ENCODE measurements at regions of chr3 and their contacts with region 1.

Region 1: GRCh38 chr3:188154014-188154808 is at the start of gene LPP:
- DNase-seq: peak; percentile 91
- ATAC-seq: peak; percentile 76
- H3K4me3 Mint-ChIP-seq: peak within 1 kb of the TSS; percentile 76
- H3K27ac Mint-ChIP-seq: peak within 1 kb of the TSS; percentile 95
- H3K4me1 Mint-ChIP-seq: peaks cover 64% of the 10 kb centered on the region
- H3K27me3 Mint-ChIP-seq: peaks cover 3% of the 10 kb centered on the region
- total RNA-seq, gene LPP: 34.7 to 40.6 TPM

Region 2: DNA sequence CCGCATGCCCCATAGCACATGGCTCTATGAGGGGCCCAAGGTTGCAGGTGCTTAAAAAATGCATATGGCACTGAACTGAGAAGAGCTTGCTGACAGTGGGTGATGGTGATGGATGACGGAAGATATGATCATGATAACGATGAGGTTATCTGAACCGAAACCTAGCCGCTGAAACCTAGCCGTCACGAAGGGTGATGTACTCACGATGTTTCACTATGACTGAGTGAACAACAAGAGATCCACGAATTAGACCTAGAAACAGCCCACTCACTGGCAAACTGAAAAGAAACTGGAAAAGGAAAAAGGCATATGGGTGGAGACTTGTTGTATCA is 351.3 kb before region 1 on chr3:
- CTCF ChIA-PET with region 1: no interaction called
- POLR2A ChIA-PET with region 1: no interaction called
- intact Hi-C with region 1: loop called in 1 of 2 experiments (anchors 5 kb)
- DNase-seq: peak; percentile 86
- ATAC-seq: peak; percentile 60
- H3K4me3 Mint-ChIP-seq: peak overlapping the region; percentile 34
- H3K27ac Mint-ChIP-seq: peak overlapping the region; percentile 81
- H3K4me1 Mint-ChIP-seq: peaks cover 93% of the 10 kb centered on the region
- H3K27me3 Mint-ChIP-seq: no peaks in the 10 kb centered on the region

Region 3: DNA sequence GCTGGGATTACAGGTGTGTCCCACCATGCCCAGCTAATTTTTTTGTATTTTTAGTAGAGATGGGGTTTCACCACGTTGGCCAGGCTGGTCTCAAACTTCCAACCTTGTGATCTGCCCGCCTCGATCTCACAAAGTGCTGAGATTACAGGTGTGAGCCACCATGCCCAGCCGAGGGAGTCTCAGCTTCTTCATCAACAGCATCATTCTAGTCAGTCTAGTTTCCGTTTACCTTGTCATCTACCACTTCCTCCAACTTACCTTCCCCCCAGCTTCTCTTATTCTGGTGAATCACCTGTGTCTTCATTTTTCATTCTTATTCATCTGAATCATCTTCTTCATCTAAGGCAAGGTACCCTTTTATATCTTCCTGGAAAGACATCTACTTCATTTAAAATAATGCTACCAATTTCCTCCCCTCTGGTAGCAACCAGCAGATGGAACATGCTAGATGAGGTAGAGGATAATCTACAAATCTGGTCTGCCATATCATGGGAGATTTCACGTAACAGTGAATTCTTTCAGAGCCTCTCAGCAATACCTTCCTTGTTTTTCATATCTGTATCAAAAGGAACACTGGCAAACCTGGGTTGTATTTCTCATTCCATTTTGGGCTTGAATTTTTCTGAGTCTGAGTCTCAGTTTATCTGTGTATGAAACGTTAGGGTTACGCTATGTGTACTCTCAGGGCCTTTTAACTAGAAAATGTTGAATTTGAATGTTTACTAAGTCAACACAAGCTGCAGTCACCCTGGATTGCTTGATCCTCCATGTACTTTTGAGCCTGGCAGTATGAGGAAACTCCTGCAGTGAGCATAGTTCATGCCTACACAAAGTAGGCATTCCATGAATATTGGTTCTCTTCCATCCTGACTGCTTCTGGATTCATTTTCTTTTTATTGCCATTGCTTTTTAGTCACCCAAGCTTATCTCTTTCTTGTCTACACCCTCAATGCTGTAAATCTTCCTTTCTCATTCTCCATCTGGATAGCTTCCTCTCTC is 16.5 kb after region 1 on chr3:
- CTCF ChIA-PET with region 1: interaction called, 3 read pairs
- POLR2A ChIA-PET with region 1: interaction called, 4 read pairs
- intact Hi-C with region 1: loop called (anchors 1 to 2 kb)
- DNase-seq: peak; percentile 82
- ATAC-seq: peak; percentile 91
- H3K4me3 Mint-ChIP-seq: peak overlapping the region; percentile 20
- H3K27ac Mint-ChIP-seq: peak overlapping the region; percentile 88
- H3K4me1 Mint-ChIP-seq: peaks cover 59% of the 10 kb centered on the region
- H3K27me3 Mint-ChIP-seq: no peaks in the 10 kb centered on the region

Region 4: GRCh38 chr3:188215129-188215528 is 60.9 kb after region 1 on chr3:
- CTCF ChIA-PET with region 1: no interaction called
- POLR2A ChIA-PET with region 1: no interaction called
- intact Hi-C with region 1: no loop called
- DNase-seq: no peak
- ATAC-seq: no peak
- H3K4me3 Mint-ChIP-seq: no peak overlapping the region
- H3K27ac Mint-ChIP-seq: no peak overlapping the region
- H3K4me1 Mint-ChIP-seq: peaks cover 30% of the 10 kb centered on the region
- H3K27me3 Mint-ChIP-seq: no peaks in the 10 kb centered on the region

Region 5: GRCh38 chr3:188257384-188258026 is 103.3 kb after region 1 on chr3:
- CTCF ChIA-PET with region 1: interaction called, 3 read pairs
- POLR2A ChIA-PET with region 1: no interaction called
- intact Hi-C with region 1: loop called in 1 of 2 experiments (anchors 2 kb)
- DNase-seq: no peak
- ATAC-seq: peak; percentile 12
- H3K4me3 Mint-ChIP-seq: no peak overlapping the region
- H3K27ac Mint-ChIP-seq: peak overlapping the region; percentile 62
- H3K4me1 Mint-ChIP-seq: peaks cover 46% of the 10 kb centered on the region
- H3K27me3 Mint-ChIP-seq: no peaks in the 10 kb centered on the region

Region 6: DNA sequence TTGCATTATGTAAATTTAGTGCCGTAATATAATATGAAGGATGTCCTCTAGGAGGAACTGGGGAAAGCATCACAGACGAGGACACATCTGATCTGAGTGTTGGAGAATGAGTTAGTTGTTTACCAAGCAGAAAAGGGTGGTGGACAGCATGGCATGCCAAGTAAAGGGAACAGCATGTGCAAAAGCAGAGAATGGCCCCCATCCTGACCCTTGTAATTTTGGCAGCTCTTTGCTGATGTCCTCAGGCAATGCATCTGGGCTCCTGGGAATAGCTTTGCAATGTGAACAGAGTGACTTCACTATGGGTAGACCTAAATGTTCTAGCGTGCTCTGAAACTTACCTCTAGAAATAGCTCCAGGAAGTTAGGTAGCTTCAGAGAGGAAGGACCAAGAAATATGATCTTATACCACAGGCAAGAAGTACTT is 263.1 kb after region 1 on chr3:
- CTCF ChIA-PET with region 1: no interaction called
- POLR2A ChIA-PET with region 1: no interaction called
- intact Hi-C with region 1: no loop called
- DNase-seq: no peak
- ATAC-seq: no peak
- H3K4me3 Mint-ChIP-seq: no peak overlapping the region
- H3K27ac Mint-ChIP-seq: no peak overlapping the region
- H3K4me1 Mint-ChIP-seq: peaks cover 6% of the 10 kb centered on the region
- H3K27me3 Mint-ChIP-seq: no peaks in the 10 kb centered on the region